ENCODE measurements at regions of chr1 and their contacts with region 1.

Region 1: DNA sequence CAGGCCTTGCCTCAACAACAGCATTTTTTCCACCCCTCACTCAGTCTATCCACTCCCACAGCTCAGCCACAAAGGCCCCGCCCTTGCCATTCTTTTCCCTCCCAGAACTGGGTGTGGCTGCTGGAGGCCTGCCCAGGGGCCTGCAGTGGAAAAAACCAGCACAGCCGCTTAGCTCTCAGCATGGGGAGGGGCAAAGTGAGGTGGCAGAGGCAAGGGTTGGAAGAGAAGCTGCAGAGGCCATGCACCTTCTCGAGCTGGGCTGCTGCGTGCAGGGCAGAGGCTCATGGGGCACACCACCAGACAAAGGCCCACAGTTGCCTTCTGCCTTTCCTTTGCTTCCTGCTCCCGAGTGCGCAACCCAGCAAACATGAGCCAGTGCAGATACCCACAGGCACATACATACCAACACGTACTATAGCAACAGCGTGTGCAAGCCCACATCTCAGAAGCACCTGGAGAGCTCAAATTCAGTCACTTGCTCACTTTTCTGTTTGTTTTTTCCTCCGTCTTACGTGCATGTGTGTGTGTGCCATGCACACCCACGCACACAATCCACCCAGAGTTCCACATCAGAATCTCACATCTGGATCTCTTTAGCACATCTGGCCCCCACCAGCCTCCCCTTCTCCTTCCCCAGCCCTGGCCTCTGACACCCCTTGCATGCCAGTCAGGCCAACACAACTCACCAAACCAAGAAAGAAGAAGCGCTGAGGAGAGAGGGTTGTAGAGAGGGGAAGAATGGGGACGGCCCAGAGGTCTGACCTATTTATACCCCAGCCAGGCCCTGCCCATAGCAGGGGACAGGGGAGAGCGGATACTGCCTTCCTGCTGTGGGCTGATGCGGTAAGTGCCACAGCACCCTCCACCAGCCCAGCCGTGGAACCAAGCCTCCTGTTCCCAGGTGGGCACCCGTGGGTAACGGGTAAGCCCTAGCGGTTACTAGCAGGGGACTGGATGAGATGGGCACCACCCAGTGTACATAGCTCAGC is at the start of gene S100A4:
- DNase-seq: peak; percentile 84 to 92 (median 89)
- H3K4me3 ChIP-seq: peak within 1 kb of the TSS; percentile 71 to 79
- H3K4me3 Mint-ChIP-seq: peak within 1 kb of the TSS; percentile 96 to 99 (median 98)
- H3K27ac ChIP-seq: peak within 1 kb of the TSS; percentile 74
- H3K27ac Mint-ChIP-seq: peak within 1 kb of the TSS; percentile 93 to 98 (median 97)
- H3K4me1 ChIP-seq: peaks cover 70% of the 10 kb centered on the region
- H3K4me1 Mint-ChIP-seq: peaks cover 49 to 81% (median 68%) of the 10 kb centered on the region in 4 donors
- H3K27me3 ChIP-seq: no peaks in the 10 kb centered on the region
- H3K27me3 Mint-ChIP-seq: no peaks in the 10 kb centered on the region
- total RNA-seq, gene S100A4: 329 to 346 TPM

Region 2: DNA sequence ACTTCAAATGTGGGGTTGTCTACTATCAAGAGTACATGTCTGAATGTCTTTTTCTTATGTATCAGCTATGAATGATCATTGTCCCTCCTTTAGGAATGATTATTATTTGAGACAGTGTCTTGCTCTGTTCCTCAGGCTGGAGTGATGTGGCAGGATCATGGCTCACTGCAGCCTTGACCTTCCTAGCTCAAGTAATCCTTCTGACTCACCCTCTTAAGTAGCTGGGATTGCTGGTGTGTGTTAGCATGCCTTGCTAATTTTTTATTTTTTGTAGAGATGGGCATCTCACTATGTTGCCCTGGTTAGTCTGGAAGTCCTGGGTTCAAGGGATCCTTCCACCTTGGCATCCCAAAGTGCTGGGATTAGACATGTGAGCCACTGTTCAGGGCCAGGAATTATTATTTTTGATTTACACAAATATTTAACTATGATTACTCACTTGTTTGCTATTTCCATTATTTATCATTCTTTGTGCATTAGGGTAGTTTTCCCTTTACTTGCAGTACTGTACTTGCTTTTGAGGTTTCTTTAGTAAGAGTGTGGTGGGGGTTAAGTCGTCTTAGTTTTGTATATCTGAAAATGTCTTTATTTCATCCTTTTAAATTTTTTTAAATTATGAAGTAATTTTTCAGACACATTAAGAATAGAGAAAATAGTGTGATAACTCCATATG is 97.7 kb before region 1 on chr1:
- CTCF ChIA-PET with region 1: no interaction called
- POLR2A ChIA-PET with region 1: no interaction called
- intact Hi-C with region 1: no loop called
- DNase-seq: no peak
- H3K4me3 ChIP-seq: no peak overlapping the region
- H3K4me3 Mint-ChIP-seq: no peak overlapping the region
- H3K27ac ChIP-seq: no peak overlapping the region
- H3K27ac Mint-ChIP-seq: no peak overlapping the region
- H3K4me1 ChIP-seq: no peaks in the 10 kb centered on the region
- H3K4me1 Mint-ChIP-seq: no peaks in the 10 kb centered on the region
- H3K27me3 ChIP-seq: peaks cover 3% of the 10 kb centered on the region
- H3K27me3 Mint-ChIP-seq: peaks cover 12 to 38% of the 10 kb centered on the region in 2 donors

Region 3: DNA sequence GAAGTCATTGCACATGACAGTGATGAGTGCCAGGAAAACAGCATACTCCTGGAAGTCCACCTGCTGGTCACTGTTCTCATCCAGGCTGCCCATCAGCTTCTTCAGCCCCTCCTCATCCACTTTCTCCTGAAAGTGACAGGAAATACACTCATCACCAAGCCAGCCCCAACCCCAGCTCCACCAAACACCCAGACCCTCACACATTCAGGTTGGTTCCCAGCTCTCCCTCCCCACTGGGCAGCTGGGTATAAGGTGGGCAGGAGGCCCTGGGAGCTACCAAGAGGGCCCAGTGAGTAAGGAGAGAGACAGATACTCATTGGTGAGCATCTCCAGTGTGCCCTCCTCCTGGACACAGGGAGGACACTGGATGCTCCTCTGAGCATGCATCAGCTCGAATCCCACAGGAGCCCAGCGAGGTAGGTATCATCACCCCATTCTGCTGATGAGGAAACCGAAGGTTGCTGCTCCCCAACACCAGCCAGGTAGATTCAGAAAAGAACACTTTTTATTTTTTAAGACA is 16.2 kb after region 1 on chr1:
- CTCF ChIA-PET with region 1: interaction called, 10 read pairs
- POLR2A ChIA-PET with region 1: interaction called, 83 read pairs
- intact Hi-C with region 1: loop called (anchors 1 kb)
- DNase-seq: no peak
- H3K4me3 ChIP-seq: no peak overlapping the region
- H3K4me3 Mint-ChIP-seq: no peak overlapping the region
- H3K27ac ChIP-seq: no peak overlapping the region
- H3K27ac Mint-ChIP-seq: peak overlapping the region in 3 of 7 donors; percentile 51 to 75 (median 52)
- H3K4me1 ChIP-seq: peaks cover 12% of the 10 kb centered on the region
- H3K4me1 Mint-ChIP-seq: peaks cover 7 to 10% (median 9%) of the 10 kb centered on the region in 4 donors
- H3K27me3 ChIP-seq: no peaks in the 10 kb centered on the region
- H3K27me3 Mint-ChIP-seq: no peaks in the 10 kb centered on the region

Region 4: DNA sequence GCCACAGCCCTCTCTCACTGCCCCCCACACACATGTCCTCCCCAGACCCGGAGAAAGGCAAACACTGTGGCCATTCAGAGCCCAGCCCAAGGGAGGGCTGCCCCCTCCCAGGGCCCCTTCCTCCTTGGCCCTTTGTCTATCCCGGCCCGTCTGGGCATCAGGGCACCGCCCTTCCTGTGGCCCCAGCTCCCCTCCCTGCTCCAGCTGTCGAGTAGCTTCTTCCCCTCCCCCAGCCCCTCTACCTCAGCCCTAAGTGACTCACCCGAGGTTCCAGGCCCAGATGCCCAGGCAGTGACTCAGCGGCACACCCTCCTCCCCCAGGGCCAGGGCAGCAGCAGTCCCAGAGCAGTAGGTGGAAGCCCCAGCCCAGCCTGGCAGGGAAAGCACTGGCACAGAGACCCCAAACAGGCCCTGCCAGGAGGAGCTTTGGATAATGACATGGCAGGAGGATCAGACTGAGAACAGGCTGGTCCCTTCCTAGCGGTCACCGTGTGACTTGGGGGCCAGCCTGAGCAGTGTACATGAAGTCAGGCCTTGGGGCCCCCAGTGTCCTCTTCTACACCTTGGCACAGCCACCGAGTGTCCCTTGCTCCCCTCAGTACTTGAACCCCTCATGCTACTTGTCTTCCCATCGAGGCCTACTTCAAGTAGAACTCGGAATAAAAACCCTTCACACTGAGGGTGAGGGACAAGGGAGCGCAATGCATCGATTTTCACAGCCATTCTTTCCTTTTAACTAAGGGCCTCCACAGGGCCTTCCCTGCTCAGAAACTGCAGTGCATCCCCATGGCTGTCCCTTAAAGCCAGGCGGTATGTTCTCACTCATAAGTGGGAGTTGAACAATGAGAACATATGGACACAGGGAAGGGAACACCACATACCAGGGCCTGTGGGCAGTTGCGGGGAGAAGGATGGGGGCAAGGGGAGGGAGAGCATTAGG is 21.3 kb after region 1 on chr1:
- CTCF ChIA-PET with region 1: interaction called, 41 read pairs
- POLR2A ChIA-PET with region 1: interaction called, 83 read pairs
- intact Hi-C with region 1: loop called (anchors 1 kb)
- DNase-seq: peak; percentile 45 to 93 (median 55)
- H3K4me3 ChIP-seq: peak overlapping the region in 1 of 2 donors; percentile 16
- H3K4me3 Mint-ChIP-seq: peak overlapping the region in 7 of 8 donors; percentile 55 to 81 (median 65)
- H3K27ac ChIP-seq: peak overlapping the region; percentile 42
- H3K27ac Mint-ChIP-seq: peak overlapping the region; percentile 90 to 94 (median 92)
- H3K4me1 ChIP-seq: peaks cover 35% of the 10 kb centered on the region
- H3K4me1 Mint-ChIP-seq: peaks cover 22 to 36% (median 28%) of the 10 kb centered on the region in 4 donors
- H3K27me3 ChIP-seq: no peaks in the 10 kb centered on the region
- H3K27me3 Mint-ChIP-seq: no peaks in the 10 kb centered on the region

Region 5: GRCh38 chr1:153626922-153627796 is 81.8 kb after region 1 on chr1 and contains the start of gene S100A13:
- CTCF ChIA-PET with region 1: no interaction called
- POLR2A ChIA-PET with region 1: no interaction called
- intact Hi-C with region 1: no loop called
- DNase-seq: peak in 1 of 5 donors; percentile 18
- H3K4me3 ChIP-seq: no peak within 1 kb of the TSS
- H3K4me3 Mint-ChIP-seq: peak within 1 kb of the TSS in 2 of 8 donors; percentile 39
- H3K27ac ChIP-seq: no peak within 1 kb of the TSS
- H3K27ac Mint-ChIP-seq: no peak within 1 kb of the TSS
- H3K4me1 ChIP-seq: no peaks in the 10 kb centered on the region
- H3K4me1 Mint-ChIP-seq: peaks cover 0 to 6% (median under 1%) of the 10 kb centered on the region in 4 donors
- H3K27me3 ChIP-seq: no peaks in the 10 kb centered on the region
- H3K27me3 Mint-ChIP-seq: peaks cover 0 to 3% of the 10 kb centered on the region in 2 donors
- total RNA-seq, gene S100A13: 4.3 to 5.2 TPM

Measured in CD4-positive, alpha-beta memory T cell (primary cell).